ENCODE measurements at regions of chr6 and their contacts with region 1.

Region 1: GRCh38 chr6:119105282-119105681 is 26.8 kb upstream of the FAM184A start:
- DNase-seq: no peak
- ATAC-seq: no peak
- H3K4me3 ChIP-seq: no peak overlapping the region
- H3K27ac ChIP-seq: no peak overlapping the region
- H3K4me1 ChIP-seq: no peaks in the 10 kb centered on the region
- H3K27me3 ChIP-seq: no peaks in the 10 kb centered on the region
- CTCF ChIP-seq: no peak
- POLR2A ChIP-seq: no peak

Region 2: GRCh38 chr6:118971682-118972081 is 133.6 kb before region 1 on chr6:
- intact Hi-C with region 1: loop called (anchors 10 kb)
- DNase-seq: no peak
- ATAC-seq: no peak
- H3K4me3 ChIP-seq: no peak overlapping the region
- H3K27ac ChIP-seq: no peak overlapping the region
- H3K4me1 ChIP-seq: no peaks in the 10 kb centered on the region
- H3K27me3 ChIP-seq: no peaks in the 10 kb centered on the region
- CTCF ChIP-seq: no peak
- POLR2A ChIP-seq: no peak

Region 3: DNA sequence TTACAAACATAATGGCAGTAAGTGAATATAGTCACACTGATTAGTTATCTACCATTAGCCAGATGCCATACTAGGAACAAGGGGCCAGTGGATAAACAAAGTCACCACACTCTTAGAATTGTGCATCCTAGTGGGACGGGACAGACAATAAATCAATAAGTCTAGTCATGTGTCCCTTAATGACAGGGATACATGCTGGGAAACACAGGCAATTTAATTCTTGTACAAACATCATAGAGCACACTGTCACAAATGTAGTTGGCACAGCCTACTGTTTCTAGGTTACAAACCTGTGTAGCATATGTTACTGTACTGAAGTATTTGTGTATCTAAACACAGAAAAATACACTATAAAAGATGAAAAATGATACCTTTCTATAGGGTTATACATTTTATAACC is 96.2 kb after region 1 on chr6:
- intact Hi-C with region 1: no loop called
- DNase-seq: no peak
- ATAC-seq: no peak
- H3K4me3 ChIP-seq: no peak overlapping the region
- H3K27ac ChIP-seq: no peak overlapping the region
- H3K4me1 ChIP-seq: peaks cover 13% of the 10 kb centered on the region
- H3K27me3 ChIP-seq: no peaks in the 10 kb centered on the region
- CTCF ChIP-seq: no peak
- POLR2A ChIP-seq: no peak

Region 4: GRCh38 chr6:119234457-119234856 is 129.2 kb after region 1 on chr6:
- intact Hi-C with region 1: no loop called
- DNase-seq: no peak
- ATAC-seq: no peak
- H3K4me3 ChIP-seq: no peak overlapping the region
- H3K27ac ChIP-seq: no peak overlapping the region
- H3K4me1 ChIP-seq: peaks cover 9% of the 10 kb centered on the region
- H3K27me3 ChIP-seq: no peaks in the 10 kb centered on the region
- CTCF ChIP-seq: no peak
- POLR2A ChIP-seq: no peak